Head of caudate nucleus (tissue), 42 donors: ENCODE measurements at regions of chr5 and their contacts with region 1.

Region 1: GRCh38 chr5:139341650-139342422 is at the start of gene PAIP2:
- DNase-seq: peak; percentile 95 to 99 (median 98)

Region 2: GRCh38 chr5:139268364-139269202 is 73.3 kb before region 1 on chr5:
- intact Hi-C with region 1: loop called (anchors 2 kb)
- DNase-seq: peak in 28 of 42 donors; percentile 28 to 80 (median 46)

Region 3: GRCh38 chr5:139293504-139294373 is 48.1 kb before region 1 on chr5 and contains the start of gene MATR3:
- intact Hi-C with region 1: loop called (anchors 2 kb)
- DNase-seq: peak; percentile 86 to 98 (median 94)

Region 4: DNA sequence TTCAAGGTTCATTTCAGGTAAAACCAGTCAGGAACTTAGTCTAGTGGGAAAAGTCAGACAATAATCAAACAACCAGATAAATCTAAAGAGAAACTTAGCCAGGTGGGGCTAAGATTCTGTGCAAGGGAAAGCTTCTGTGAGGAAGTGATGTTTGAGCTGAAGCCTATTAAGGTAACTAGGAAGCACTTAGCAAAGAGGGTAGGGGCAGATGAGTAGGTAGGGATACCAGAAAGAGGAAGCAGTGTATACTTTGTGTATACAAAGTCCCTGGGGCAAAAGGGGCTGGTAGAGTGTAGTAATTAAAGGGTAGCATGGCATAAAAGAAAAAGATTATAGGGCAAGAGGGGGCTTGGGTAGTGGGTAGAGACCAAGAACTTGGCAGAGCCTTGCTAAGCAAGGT is 65.7 kb after region 1 on chr5:
- intact Hi-C with region 1: loop called (anchors 5 kb)
- DNase-seq: no peak

Region 5: GRCh38 chr5:139560752-139561654 is 219.2 kb after region 1 on chr5 and contains the start of gene UBE2D2:
- intact Hi-C with region 1: no loop called
- DNase-seq: peak; percentile 92 to 99 (median 96)